Endothelial cell of umbilical vein (primary cell): ENCODE measurements at regions of chr3 and their contacts with region 1.

Region 1: GRCh38 chr3:138915503-138916498 is 31.1 kb downstream of the FOXL2 start:
- DNase-seq: peak; percentile 88
- H3K4me3 ChIP-seq: peak overlapping the region; percentile 12 to 81 (median 64)
- H3K27ac ChIP-seq: peak overlapping the region; percentile 74
- H3K4me1 ChIP-seq: peaks cover 8% of the 10 kb centered on the region
- H3K27me3 ChIP-seq: no peaks in the 10 kb centered on the region
- CTCF ChIP-seq: peak; percentile 92 to 97
- POLR2A ChIP-seq: no peak

Region 2: GRCh38 chr3:138479438-138479863 is 436.4 kb before region 1 on chr3:
- CTCF ChIA-PET with region 1: interaction called, 120 read pairs
- POLR2A ChIA-PET with region 1: no interaction called
- dilution Hi-C with region 1: no loop called
- intact Hi-C with region 1: loop called (anchors 1 kb)
- DNase-seq: peak; percentile 55
- H3K4me3 ChIP-seq: no peak overlapping the region
- H3K27ac ChIP-seq: no peak overlapping the region
- H3K4me1 ChIP-seq: no peaks in the 10 kb centered on the region
- H3K27me3 ChIP-seq: no peaks in the 10 kb centered on the region
- CTCF ChIP-seq: peak; percentile 79 to 87
- POLR2A ChIP-seq: no peak

Region 3: DNA sequence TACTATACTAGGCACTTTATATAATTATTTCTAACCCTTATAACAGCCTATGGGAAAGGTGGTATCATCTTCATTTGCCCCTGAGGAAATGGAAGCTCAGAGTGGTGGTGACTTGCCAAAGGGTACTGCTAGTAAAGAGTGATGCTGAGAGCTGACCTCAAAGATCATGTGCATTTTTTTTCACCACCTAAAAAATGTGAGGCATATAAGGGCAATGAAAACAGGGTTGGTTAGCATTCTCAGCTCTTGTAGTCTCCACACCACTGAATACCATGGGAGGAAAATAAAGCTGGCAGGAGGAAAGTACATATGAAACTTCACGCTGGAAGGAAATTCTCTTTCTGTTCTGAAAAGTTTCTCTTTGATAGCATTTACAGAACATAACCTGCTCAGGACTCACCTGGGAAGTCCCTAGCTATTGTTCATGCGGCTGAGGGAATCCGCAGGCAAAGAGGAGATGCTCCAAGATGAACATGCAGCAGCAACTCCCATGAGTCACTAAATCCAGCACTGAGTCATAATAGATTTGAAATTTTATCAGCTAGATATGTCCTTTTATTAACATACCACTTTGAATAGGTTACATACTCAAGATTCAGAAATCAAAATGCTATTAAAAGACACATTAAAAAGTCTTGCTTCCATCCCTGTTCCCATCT is 290.0 kb before region 1 on chr3:
- CTCF ChIA-PET with region 1: interaction called, 11 read pairs
- POLR2A ChIA-PET with region 1: no interaction called
- dilution Hi-C with region 1: no loop called
- intact Hi-C with region 1: no loop called
- DNase-seq: peak; percentile 7
- H3K4me3 ChIP-seq: no peak overlapping the region
- H3K27ac ChIP-seq: no peak overlapping the region
- H3K4me1 ChIP-seq: no peaks in the 10 kb centered on the region
- H3K27me3 ChIP-seq: no peaks in the 10 kb centered on the region
- CTCF ChIP-seq: no peak
- POLR2A ChIP-seq: no peak

Region 4: GRCh38 chr3:138717348-138717747 is 198.5 kb before region 1 on chr3:
- CTCF ChIA-PET with region 1: interaction called, 31 read pairs
- POLR2A ChIA-PET with region 1: no interaction called
- dilution Hi-C with region 1: no loop called
- intact Hi-C with region 1: no loop called
- DNase-seq: no peak
- H3K4me3 ChIP-seq: no peak overlapping the region
- H3K27ac ChIP-seq: no peak overlapping the region
- H3K4me1 ChIP-seq: no peaks in the 10 kb centered on the region
- H3K27me3 ChIP-seq: no peaks in the 10 kb centered on the region
- CTCF ChIP-seq: no peak
- POLR2A ChIP-seq: no peak

Region 5: DNA sequence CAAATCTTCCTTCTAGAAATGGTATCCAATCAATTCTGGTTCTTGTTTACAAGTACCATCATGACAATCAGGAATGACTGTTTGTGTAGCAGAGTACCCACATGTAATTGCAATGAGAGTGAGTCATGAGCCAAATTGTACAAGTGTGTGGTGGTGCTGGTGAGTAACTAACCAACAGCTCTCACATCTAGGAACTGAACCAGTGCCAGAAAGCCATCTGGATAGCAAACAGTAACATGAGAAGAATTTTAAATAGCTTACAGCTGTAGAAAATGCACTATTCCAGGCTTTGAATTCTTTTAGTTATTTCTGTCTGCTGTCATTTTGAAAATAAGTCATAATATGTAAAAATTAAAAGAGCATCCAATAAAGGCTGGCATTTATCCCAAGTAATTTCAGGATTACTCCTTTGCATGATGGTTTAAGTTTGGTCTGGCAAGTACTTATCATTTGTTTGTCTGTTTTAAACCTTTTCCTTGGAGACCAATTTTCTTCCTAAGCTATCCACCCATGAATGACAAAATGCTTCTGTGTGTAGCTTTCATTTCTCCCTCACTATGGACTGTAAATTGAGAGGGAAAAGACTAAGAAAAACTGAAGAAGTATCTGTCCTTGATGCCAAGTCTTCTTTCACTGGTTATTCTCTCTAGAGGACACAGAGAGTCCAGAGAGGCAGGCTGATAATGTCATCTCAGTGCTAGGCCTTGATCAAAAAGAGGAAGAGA is 141.1 kb before region 1 on chr3:
- CTCF ChIA-PET with region 1: interaction called, 54 read pairs
- POLR2A ChIA-PET with region 1: no interaction called
- dilution Hi-C with region 1: no loop called
- intact Hi-C with region 1: loop called (anchors 1 kb)
- DNase-seq: peak; percentile 94
- H3K4me3 ChIP-seq: no peak overlapping the region
- H3K27ac ChIP-seq: peak overlapping the region; percentile 63
- H3K4me1 ChIP-seq: peaks cover 17% of the 10 kb centered on the region
- H3K27me3 ChIP-seq: no peaks in the 10 kb centered on the region
- CTCF ChIP-seq: no peak
- POLR2A ChIP-seq: no peak

Region 6: DNA sequence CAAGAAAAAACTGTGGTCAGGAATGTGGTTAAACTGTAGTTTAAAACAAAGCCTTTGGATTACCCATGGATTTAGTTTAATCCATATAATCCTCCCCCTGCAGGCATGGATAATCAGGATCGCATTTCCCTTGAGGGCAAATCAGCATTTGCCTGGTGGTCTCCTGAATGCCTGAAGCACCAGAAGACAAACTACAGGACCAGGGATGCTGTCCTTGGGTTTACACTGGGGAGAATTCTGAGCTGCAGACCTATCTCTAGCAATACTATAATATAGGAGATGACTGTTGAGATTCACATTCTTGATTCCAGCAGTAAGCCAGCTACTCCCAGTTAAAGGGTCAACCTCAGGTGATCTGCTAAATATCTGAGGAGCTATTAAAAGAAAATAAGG is 91.7 kb before region 1 on chr3:
- CTCF ChIA-PET with region 1: interaction called, 66 read pairs
- POLR2A ChIA-PET with region 1: no interaction called
- dilution Hi-C with region 1: no loop called
- intact Hi-C with region 1: loop called (anchors 2 kb)
- DNase-seq: no peak
- H3K4me3 ChIP-seq: no peak overlapping the region
- H3K27ac ChIP-seq: peak overlapping the region; percentile 71
- H3K4me1 ChIP-seq: peaks cover 10% of the 10 kb centered on the region
- H3K27me3 ChIP-seq: no peaks in the 10 kb centered on the region
- CTCF ChIP-seq: no peak
- POLR2A ChIP-seq: no peak

Region 7: DNA sequence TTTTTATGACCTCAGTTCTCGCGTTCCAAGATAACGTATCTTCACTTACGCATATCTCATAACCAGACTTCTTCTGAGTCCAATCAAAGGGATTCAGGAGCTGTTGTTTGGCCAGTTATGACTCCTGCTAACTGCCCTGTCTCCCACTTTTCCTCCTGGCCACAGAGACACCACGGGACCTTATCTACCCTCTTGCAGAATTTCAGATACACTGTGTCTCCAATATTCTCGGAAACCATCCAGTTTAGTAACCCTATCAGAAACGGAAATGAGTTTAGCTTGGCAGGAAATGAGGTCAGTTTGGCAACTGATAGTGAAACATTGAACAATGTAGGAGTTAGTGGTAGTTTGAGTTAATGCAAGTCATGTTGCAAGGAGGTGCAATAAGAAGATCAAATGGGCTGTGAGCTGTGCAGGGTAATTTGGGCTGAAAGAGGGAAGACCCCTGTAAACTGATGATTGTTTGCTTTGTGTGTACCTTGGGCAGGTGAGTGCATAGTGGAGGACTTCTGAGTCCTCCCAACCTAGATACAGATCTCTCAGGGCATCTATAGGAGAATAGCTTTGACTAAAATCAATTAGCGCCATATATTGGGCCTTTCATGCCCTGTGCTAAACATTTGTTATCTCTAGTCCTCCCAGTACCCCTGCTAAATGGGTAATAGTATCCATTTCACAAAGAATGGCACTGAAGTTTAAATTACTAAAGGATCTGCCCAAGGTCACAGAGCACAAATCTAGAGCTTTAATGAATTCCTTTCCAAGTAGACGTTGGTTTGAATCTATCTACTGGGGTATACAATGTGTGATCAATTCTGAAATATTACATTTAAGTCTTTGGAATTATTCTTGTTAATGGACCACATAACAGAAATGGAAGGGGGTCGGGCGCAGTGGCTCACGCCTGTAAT is 39.8 kb before region 1 on chr3:
- CTCF ChIA-PET with region 1: interaction called, 30 read pairs
- POLR2A ChIA-PET with region 1: no interaction called
- dilution Hi-C with region 1: no loop called
- intact Hi-C with region 1: loop called (anchors 1 kb)
- DNase-seq: peak; percentile 86
- H3K4me3 ChIP-seq: no peak overlapping the region
- H3K27ac ChIP-seq: peak overlapping the region; percentile 79
- H3K4me1 ChIP-seq: peaks cover 13% of the 10 kb centered on the region
- H3K27me3 ChIP-seq: no peaks in the 10 kb centered on the region
- CTCF ChIP-seq: no peak
- POLR2A ChIP-seq: no peak